HepG2 (cell line): ENCODE measurements at regions of chr4 and their contacts with region 1.

Region 1: DNA sequence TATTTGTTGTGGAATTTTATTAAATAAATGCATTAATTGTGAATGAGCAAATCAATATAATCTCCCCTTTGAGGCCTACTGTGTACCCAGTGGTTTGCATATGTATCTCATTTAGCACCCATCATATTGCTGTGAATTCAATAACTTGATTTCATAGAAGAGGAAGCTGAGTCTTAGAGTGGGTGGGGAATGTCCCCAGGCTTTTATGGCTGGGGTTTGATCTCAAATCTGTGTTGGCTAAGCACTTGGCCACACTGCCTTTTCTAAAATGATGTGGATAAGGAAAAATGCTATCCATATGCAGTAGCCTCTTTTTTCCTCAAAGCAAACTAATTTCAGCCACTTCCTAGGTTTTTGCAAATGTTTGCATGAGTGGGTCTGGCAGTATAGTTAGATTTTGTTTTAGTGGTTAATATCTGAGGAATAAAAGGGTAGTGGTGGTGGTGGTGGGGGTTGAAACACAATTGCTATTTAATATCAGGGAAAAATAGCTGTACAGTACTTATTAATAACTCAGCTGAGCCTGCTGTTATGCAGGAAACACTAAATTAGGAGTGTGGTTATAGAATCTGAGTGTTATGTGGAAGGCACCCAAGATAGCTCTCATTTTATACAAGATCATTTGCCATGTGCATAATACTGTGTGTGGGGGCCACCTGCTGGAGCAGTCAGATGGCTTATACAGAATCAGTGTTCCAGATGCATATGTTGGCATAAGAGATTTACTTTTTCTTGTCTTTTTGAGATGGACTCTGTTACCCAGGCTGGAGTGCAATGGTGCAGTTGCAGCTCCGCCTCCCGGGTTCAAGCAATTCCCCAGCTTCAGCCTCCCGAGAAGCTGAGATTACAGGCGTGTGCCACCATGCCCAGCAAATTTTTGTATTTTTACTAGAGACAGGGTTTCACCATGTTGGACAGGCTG is 108.0 kb downstream of the TMEM131L start:
- DNase-seq: peak; percentile 63
- ATAC-seq: peak; percentile 90
- H3K4me3 ChIP-seq: no peak overlapping the region
- H3K27ac ChIP-seq: no peak overlapping the region
- H3K4me1 ChIP-seq: peaks cover 44% of the 10 kb centered on the region
- H3K27me3 ChIP-seq: no peaks in the 10 kb centered on the region
- CTCF ChIP-seq: peak; percentile 88
- EP300 ChIP-seq: no peak
- POLR2A ChIP-seq: no peak
- RAD21 ChIP-seq: peak; percentile 82

Region 2: GRCh38 chr4:152014280-152014679 is 1559.9 kb before region 1 on chr4:
- CTCF ChIA-PET with region 1: no interaction called
- POLR2A ChIA-PET with region 1: no interaction called
- in situ Hi-C with region 1: no loop called
- intact Hi-C with region 1: no loop called
- DNase-seq: no peak
- ATAC-seq: no peak
- H3K4me3 ChIP-seq: no peak overlapping the region
- H3K27ac ChIP-seq: no peak overlapping the region
- H3K4me1 ChIP-seq: no peaks in the 10 kb centered on the region
- H3K27me3 ChIP-seq: peaks cover 2 to 7% of the 10 kb centered on the region in 2 experiments; a peak in 3 of 5 replicates
- CTCF ChIP-seq: no peak
- EP300 ChIP-seq: no peak
- POLR2A ChIP-seq: no peak
- RAD21 ChIP-seq: no peak

Region 3: DNA sequence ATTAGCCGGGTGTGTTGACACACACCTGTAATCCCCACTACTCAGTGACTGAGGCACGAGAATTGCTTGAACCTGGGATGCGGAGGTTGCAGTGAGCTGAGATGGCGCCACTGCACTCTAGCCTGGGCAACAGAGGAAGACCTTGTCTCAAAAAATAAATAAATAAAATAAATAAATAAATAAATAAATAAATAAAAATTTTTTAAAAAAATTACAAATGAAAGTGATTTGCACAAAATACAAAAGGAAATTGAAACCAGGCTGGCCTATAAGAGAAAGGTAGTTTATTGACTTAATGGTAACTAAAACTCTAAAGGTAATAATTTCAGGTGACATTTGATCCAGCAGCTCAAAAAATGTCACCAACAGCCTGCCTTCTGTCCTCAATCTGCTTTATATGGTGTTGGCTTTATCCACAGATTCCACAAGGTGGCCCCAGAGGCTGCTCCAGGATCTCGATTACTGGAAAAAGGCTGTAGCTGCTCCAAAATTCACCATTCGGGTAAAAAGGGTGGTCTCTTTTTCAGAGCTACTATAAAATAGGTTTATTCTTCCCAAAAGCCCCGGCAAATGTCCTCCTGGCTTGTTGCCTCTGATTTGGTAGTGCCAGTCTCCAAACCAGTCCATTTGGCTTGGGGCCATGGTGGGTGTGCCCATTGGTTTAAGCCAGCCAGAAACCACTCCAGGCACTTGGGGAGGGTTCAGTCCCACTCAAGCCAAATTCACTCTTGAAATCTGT is 431.3 kb before region 1 on chr4:
- CTCF ChIA-PET with region 1: interaction called, 3 read pairs
- POLR2A ChIA-PET with region 1: no interaction called
- in situ Hi-C with region 1: no loop called
- intact Hi-C with region 1: loop called (anchors 1 kb)
- DNase-seq: peak; percentile 63
- ATAC-seq: peak; percentile 88
- H3K4me3 ChIP-seq: no peak overlapping the region; a peak in 1 of 6 replicates
- H3K27ac ChIP-seq: no peak overlapping the region
- H3K4me1 ChIP-seq: peaks cover 14% of the 10 kb centered on the region
- H3K27me3 ChIP-seq: 0 out of 5 replicates have a peak, but pooled peaks cover 0 to 2% of the 10 kb centered on the region in 2 experiments
- CTCF ChIP-seq: peak; percentile 77
- EP300 ChIP-seq: no peak
- POLR2A ChIP-seq: no peak
- RAD21 ChIP-seq: peak; percentile 63

Region 4: GRCh38 chr4:153204247-153205027 is 369.7 kb before region 1 on chr4 and contains the start of gene TRIM2:
- CTCF ChIA-PET with region 1: interaction called, 4 read pairs
- POLR2A ChIA-PET with region 1: no interaction called
- in situ Hi-C with region 1: no loop called
- intact Hi-C with region 1: loop called (anchors 10 kb)
- DNase-seq: peak; percentile 71
- ATAC-seq: peak; percentile 79
- H3K4me3 ChIP-seq: peak within 1 kb of the TSS; percentile 32 to 67 (median 51)
- H3K27ac ChIP-seq: no peak within 1 kb of the TSS
- H3K4me1 ChIP-seq: peaks cover 36% of the 10 kb centered on the region
- H3K27me3 ChIP-seq: peaks cover 0 to 16% of the 10 kb centered on the region in 2 experiments; a peak in 2 of 5 replicates
- CTCF ChIP-seq: no peak
- EP300 ChIP-seq: no peak
- POLR2A ChIP-seq: peak in 1 of 2 experiments; percentile 33; a peak in 1 of 4 replicates
- RAD21 ChIP-seq: no peak
- total RNA-seq, gene TRIM2: 4.2 and 7.0 TPM in 2 replicates

Region 5: DNA sequence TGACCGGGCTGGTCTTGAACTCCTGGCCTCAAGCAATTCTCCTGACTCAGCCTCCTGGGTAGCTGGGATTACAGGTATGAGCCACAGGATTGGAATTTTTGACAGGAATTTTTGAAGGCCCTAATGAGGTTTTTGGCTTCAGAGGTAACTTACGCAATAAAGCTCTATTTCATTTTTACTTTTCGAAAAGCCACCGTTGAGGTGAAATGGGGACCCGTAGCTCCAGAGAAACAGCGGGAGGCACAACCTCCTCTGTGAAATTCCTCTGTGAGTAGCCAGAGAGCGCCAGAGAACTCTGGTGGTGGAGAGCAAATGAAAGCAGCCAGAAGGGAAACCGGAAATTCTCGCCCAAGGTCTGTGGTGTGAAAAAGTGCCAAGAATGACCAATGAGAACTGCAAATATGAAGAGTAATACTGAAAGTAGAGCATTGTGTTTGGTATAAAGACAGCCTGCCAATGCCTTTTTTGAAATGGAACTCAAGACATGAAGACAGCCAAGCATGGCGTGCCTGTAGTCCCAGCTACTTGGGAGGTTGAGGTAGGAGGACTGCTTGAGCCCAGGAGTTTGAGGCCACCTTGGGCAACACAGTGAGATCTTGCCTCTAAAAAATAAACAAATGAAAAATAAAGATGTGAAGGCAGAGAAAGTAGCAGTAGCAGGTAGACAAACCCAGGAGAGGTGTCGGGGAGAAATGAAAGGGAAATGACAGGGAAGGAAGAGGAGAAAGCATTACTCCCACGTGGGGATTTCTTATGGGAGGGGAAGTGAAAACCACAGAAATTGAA is 141.0 kb before region 1 on chr4:
- CTCF ChIA-PET with region 1: interaction called, 21 read pairs
- POLR2A ChIA-PET with region 1: no interaction called
- in situ Hi-C with region 1: loop called (anchors 5 kb)
- intact Hi-C with region 1: loop called (anchors 1 kb)
- DNase-seq: peak; percentile 79
- ATAC-seq: peak; percentile 95
- H3K4me3 ChIP-seq: no peak overlapping the region
- H3K27ac ChIP-seq: no peak overlapping the region
- H3K4me1 ChIP-seq: peaks cover 15% of the 10 kb centered on the region
- H3K27me3 ChIP-seq: no peaks in the 10 kb centered on the region
- CTCF ChIP-seq: peak; percentile 83
- EP300 ChIP-seq: no peak
- POLR2A ChIP-seq: no peak
- RAD21 ChIP-seq: peak; percentile 86

Region 6: DNA sequence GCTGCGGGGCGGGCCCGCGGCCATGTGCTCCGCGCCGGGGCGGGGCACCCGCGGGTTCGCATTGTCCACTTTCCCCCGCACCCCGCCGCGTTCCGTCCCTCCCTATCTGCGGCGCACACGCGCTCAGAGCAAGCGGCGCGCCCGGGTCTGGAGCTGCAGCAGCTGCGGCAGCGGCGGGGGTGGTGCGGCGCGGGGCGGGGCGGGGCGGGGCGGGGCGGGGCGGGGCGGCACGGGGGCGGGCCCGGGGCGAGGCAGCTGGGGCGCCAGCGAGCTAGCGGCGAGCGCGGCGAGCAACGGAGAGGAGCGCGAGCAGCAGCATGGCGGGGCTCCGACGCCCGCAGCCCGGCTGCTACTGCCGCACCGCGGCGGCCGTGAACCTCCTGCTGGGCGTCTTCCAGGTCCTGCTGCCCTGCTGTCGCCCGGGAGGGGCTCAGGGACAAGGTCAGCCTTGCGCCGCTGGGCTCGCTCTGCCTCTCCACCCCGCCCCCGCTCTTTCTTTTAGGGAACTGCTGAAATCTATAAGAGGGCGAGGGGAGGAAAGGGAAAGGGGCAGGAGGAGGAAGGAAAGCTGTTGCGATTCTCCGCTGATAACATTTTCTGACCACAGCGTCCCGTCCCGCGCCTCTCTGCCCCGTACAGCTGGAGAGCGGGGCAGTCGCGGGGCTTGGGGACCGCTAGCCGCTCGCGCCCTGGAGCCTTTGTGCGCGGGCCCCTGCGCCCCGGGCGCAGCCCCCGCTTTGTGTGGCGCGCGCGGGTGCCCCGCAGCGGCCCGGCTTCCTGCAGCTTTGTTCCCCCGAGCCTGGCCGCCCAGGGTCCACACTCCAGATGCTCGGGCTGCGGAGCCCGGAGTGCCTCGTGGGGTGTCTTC is 107.8 kb before region 1 on chr4 and contains the start of gene TMEM131L:
- CTCF ChIA-PET with region 1: interaction called, 4 read pairs
- POLR2A ChIA-PET with region 1: interaction called, 3 read pairs
- in situ Hi-C with region 1: no loop called
- intact Hi-C with region 1: loop called (anchors 1 kb)
- DNase-seq: peak; percentile 29
- ATAC-seq: peak; percentile 88
- H3K4me3 ChIP-seq: peak within 1 kb of the TSS; percentile 77 to 89 (median 86)
- H3K27ac ChIP-seq: no peak within 1 kb of the TSS
- H3K4me1 ChIP-seq: peaks cover 26% of the 10 kb centered on the region
- H3K27me3 ChIP-seq: peaks cover 0 to 12% of the 10 kb centered on the region in 2 experiments; a peak in 3 of 5 replicates
- CTCF ChIP-seq: peak; percentile 23; the same call in 1 of the 2 replicates
- EP300 ChIP-seq: no peak
- POLR2A ChIP-seq: peak; percentile 50 to 53; a peak in 3 of 4 replicates
- RAD21 ChIP-seq: no peak
- total RNA-seq, gene TMEM131L: 2.4 and 4.5 TPM in 2 replicates

Region 7: GRCh38 chr4:153594210-153594609 is 20.1 kb after region 1 on chr4:
- CTCF ChIA-PET with region 1: no interaction called
- POLR2A ChIA-PET with region 1: no interaction called
- in situ Hi-C with region 1: no loop called
- intact Hi-C with region 1: no loop called
- DNase-seq: no peak
- ATAC-seq: no peak
- H3K4me3 ChIP-seq: no peak overlapping the region
- H3K27ac ChIP-seq: no peak overlapping the region
- H3K4me1 ChIP-seq: no peaks in the 10 kb centered on the region
- H3K27me3 ChIP-seq: no peaks in the 10 kb centered on the region
- CTCF ChIP-seq: no peak
- EP300 ChIP-seq: no peak
- POLR2A ChIP-seq: no peak
- RAD21 ChIP-seq: no peak